ENCODE measurements at regions of chr13 and their contacts with region 1.

Region 1: DNA sequence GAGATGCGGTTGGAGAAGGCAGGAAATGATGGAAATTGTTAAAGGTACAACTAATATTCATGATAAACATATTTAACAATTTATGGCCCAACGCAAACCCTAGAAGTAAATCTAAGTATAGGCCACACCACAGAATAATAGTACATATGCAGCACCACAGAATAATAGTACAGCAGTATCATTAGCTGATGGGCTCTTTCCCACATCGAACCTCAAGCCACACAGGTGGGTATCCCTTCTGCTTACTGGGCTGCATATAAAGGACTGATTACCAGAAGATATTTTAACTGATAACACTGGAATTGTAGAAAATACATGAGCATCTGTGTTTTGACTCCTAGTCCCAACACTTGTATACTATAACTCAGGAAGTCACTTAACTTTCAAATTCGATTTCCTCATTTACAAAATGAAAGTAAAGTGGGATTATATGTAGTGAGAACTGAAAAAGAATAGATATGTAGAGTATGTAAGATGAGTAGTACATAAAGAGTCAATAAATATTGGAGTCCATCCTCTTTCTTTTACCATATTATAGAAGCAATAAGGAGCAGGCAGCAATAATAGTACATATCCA is 91.5 kb downstream of the TSC22D1 start:
- DNase-seq: no peak
- ATAC-seq: no peak
- H3K4me3 ChIP-seq: no peak overlapping the region
- H3K27ac ChIP-seq: no peak overlapping the region
- H3K4me1 ChIP-seq: no peaks in the 10 kb centered on the region
- H3K27me3 ChIP-seq: no peaks in the 10 kb centered on the region
- CTCF ChIP-seq: no peak
- EP300 ChIP-seq: no peak
- POLR2A ChIP-seq: no peak
- RAD21 ChIP-seq: no peak

Region 2: DNA sequence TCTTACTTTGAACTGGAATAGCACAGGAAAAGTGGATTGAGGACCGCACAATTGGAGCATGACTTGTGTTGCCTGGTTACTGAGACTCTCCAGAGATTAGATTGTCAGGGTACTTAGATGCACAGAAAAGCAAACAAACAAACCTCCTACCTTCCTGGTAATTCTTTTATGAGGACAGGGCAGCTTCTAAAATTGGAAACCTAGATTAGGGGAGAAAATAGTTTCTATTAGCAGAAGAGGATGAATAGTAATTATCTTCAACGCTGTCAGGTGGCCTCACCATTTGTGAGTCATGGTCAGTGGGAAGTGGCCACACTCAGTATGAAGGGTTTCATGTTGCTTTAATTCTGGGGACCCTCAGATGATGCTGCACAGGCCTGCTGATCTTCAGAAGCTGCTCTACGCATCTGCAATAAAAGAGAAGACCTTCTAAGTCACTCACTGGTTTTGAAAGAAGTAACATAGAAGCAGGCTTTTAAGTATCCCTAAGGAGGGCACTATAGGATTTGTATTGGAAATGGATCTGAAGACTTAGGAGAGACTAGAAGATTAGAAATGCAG is 498.1 kb before region 1 on chr13:
- CTCF ChIA-PET with region 1: no interaction called
- POLR2A ChIA-PET with region 1: no interaction called
- in situ Hi-C with region 1: no loop called
- intact Hi-C with region 1: no loop called
- DNase-seq: no peak
- ATAC-seq: no peak
- H3K4me3 ChIP-seq: no peak overlapping the region
- H3K27ac ChIP-seq: no peak overlapping the region
- H3K4me1 ChIP-seq: peaks cover 8% of the 10 kb centered on the region; the same call in 1 of the 2 replicates
- H3K27me3 ChIP-seq: no peaks in the 10 kb centered on the region; a peak in 2 of 5 replicates
- CTCF ChIP-seq: no peak
- EP300 ChIP-seq: no peak
- POLR2A ChIP-seq: no peak
- RAD21 ChIP-seq: no peak

Region 3: GRCh38 chr13:44577236-44578066 is 92.8 kb after region 1 on chr13:
- CTCF ChIA-PET with region 1: no interaction called
- POLR2A ChIA-PET with region 1: no interaction called
- in situ Hi-C with region 1: no loop called
- intact Hi-C with region 1: loop called (anchors 1 kb)
- DNase-seq: peak; percentile 87
- ATAC-seq: peak; percentile 82
- H3K4me3 ChIP-seq: peak overlapping the region; percentile 90 to 94 (median 91)
- H3K27ac ChIP-seq: peak overlapping the region; percentile 88
- H3K4me1 ChIP-seq: peaks cover 39% of the 10 kb centered on the region
- H3K27me3 ChIP-seq: no peaks in the 10 kb centered on the region; a peak in 1 of 5 replicates
- CTCF ChIP-seq: no peak
- EP300 ChIP-seq: no peak
- POLR2A ChIP-seq: peak; percentile 39 to 78
- RAD21 ChIP-seq: no peak

Region 4: DNA sequence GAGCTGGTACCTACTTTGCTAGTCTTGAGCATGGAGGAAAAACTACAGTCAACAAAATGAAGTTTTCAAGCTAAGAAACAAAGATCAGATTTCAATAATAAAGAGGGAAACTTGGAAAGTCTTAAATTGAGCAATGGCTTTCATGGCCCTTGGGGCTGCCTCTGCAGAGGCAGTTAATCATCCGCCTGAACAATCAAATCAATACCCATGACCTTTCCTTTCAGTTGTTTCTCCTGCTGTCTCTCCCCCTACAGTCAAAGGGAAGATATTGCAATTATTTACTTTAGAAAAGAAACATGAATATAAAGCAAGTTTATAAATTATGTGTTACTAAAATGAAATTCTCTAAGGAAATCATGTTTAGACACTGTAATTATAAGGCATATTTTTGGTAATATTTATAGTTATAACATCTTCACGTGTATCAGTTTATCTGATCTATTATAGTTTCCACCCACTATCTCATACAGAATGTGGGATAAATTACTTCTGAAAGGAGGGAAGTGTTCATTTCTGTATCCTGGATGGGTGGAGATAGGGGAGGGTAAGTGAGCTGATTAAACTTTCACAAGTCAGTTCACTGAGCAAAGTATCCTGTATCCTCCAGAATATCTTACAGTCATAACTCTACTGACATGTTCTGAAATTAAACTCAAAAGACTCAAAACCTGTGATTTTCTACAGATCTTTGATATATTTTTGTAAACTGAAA is 163.9 kb after region 1 on chr13:
- CTCF ChIA-PET with region 1: interaction called, 7 read pairs
- POLR2A ChIA-PET with region 1: no interaction called
- in situ Hi-C with region 1: no loop called
- intact Hi-C with region 1: loop called (anchors 1 kb)
- DNase-seq: peak; percentile 45
- ATAC-seq: peak; percentile 93
- H3K4me3 ChIP-seq: no peak overlapping the region
- H3K27ac ChIP-seq: no peak overlapping the region
- H3K4me1 ChIP-seq: 0 out of 2 replicates have a peak, but pooled peaks cover 6% of the 10 kb centered on the region
- H3K27me3 ChIP-seq: no peaks in the 10 kb centered on the region
- CTCF ChIP-seq: peak; percentile 41
- EP300 ChIP-seq: no peak
- POLR2A ChIP-seq: no peak
- RAD21 ChIP-seq: 0 out of 2 replicates have a peak, but pooled peaks have one; percentile 31

Region 5: DNA sequence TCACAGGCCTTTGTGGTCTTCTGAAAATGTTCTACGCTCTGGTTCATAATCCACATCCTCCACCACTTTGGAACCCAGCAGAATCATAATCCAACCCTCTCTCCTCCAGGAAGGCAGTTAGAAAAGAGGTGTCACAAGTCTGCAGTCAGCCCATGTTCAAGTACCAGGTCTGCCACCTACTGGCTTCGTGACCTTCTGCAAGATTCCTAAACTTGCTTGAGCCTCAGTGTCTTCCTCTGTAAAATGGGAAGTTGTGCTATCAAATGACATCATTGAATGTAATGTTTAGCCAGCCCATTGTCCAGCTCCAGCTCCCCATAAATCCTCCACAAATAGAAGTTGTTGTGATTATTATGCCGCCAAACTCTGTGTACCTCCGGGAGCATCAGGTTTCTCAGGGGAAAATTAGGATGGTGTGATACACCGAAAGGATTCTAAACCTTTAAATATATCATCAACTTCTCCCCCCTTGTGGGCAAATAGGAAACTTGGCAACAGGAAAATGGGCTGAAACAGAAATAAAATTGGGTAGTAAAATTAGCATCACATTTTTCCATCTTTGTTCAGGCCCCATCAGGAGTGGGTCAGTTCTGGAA is 394.9 kb after region 1 on chr13:
- CTCF ChIA-PET with region 1: interaction called, 5 read pairs
- POLR2A ChIA-PET with region 1: no interaction called
- in situ Hi-C with region 1: loop called (anchors 10 kb)
- intact Hi-C with region 1: loop called (anchors 5 kb)
- DNase-seq: no peak
- ATAC-seq: peak; percentile 31; the same call in 1 of the 3 replicates
- H3K4me3 ChIP-seq: no peak overlapping the region
- H3K27ac ChIP-seq: no peak overlapping the region
- H3K4me1 ChIP-seq: peaks cover 7% of the 10 kb centered on the region
- H3K27me3 ChIP-seq: no peaks in the 10 kb centered on the region; a peak in 1 of 5 replicates
- CTCF ChIP-seq: peak; percentile 65
- EP300 ChIP-seq: no peak
- POLR2A ChIP-seq: no peak
- RAD21 ChIP-seq: no peak

Region 6: GRCh38 chr13:44969551-44970484 is 485.2 kb after region 1 on chr13:
- CTCF ChIA-PET with region 1: interaction called, 9 read pairs
- POLR2A ChIA-PET with region 1: no interaction called
- in situ Hi-C with region 1: loop called (anchors 10 kb)
- intact Hi-C with region 1: loop called (anchors 1 kb)
- DNase-seq: peak; percentile 49
- ATAC-seq: peak; percentile 69
- H3K4me3 ChIP-seq: no peak overlapping the region
- H3K27ac ChIP-seq: no peak overlapping the region
- H3K4me1 ChIP-seq: peaks cover 16% of the 10 kb centered on the region
- H3K27me3 ChIP-seq: no peaks in the 10 kb centered on the region
- CTCF ChIP-seq: peak; percentile 72
- EP300 ChIP-seq: no peak
- POLR2A ChIP-seq: no peak
- RAD21 ChIP-seq: 0 out of 2 replicates have a peak, but pooled peaks have one; percentile 26

Measured in HepG2 (cell line).